Natural killer cell (primary cell): ENCODE measurements at regions of chr4 and their contacts with region 1.

Region 1: GRCh38 chr4:174282836-174283506 is 496 bp downstream of the FBXO8 start:
- DNase-seq: peak; percentile 71 to 93
- ATAC-seq: peak; percentile 94 to 99 (median 96)
- H3K4me3 ChIP-seq: peak overlapping the region; percentile 84
- H3K4me3 Mint-ChIP-seq: peak overlapping the region; percentile 99
- H3K27ac ChIP-seq: peak overlapping the region; percentile 94
- H3K27ac Mint-ChIP-seq: peak overlapping the region; percentile 99
- H3K4me1 ChIP-seq: peaks cover 4% of the 10 kb centered on the region
- H3K4me1 Mint-ChIP-seq: peaks cover 65 to 78% of the 10 kb centered on the region in 2 donors
- H3K27me3 ChIP-seq: no peaks in the 10 kb centered on the region
- H3K27me3 Mint-ChIP-seq: no peaks in the 10 kb centered on the region
- CTCF ChIP-seq: no peak

Region 2: DNA sequence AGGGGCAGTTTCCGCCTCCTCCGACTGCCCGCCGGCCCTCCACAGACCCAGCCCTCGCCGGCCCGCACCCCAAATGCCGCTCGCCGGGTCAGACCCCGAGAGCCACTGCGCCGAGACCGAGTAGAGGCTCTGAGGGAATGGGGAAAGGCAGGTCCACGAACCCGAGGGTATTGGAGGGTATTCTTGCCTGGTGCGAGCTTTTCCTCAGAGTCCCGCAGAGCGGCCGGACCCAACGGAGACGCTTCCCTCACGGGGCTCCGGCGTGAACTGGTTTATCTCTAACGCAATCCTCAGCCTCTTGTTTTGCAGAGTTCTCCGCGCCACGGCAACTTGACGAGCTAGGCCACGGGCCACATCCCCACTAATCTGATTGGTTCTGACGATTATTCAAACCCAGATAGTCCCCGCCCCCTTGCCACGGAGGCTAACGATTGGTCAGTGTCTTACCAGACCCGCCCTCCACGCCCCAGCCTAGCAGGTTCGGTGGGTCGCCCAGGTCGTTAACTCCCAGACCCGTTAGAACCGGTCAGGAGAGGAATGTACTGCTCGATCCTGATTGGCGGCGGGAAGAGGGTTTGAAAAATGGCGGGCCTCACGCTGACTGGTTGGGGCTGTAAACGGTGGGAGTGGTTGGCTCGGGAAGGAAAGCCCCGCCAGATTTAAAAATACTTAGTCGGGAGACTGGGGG is 948.7 kb before region 1 on chr4 and contains the start of gene HMGB2:
- intact Hi-C with region 1: loop called (anchors 2 kb)
- DNase-seq: peak; percentile 99 to 100
- ATAC-seq: peak; percentile 90 to 98 (median 90)
- H3K4me3 ChIP-seq: peak within 1 kb of the TSS; percentile 60
- H3K4me3 Mint-ChIP-seq: peak within 1 kb of the TSS; percentile 99
- H3K27ac ChIP-seq: peak within 1 kb of the TSS; percentile 89
- H3K27ac Mint-ChIP-seq: peak within 1 kb of the TSS; percentile 98 to 99
- H3K4me1 ChIP-seq: peaks cover 11% of the 10 kb centered on the region
- H3K4me1 Mint-ChIP-seq: peaks cover 27 to 33% of the 10 kb centered on the region in 2 donors
- H3K27me3 ChIP-seq: no peaks in the 10 kb centered on the region
- H3K27me3 Mint-ChIP-seq: no peaks in the 10 kb centered on the region
- CTCF ChIP-seq: no peak
- total RNA-seq, gene HMGB2: 145 to 214 (median 151) TPM

Region 3: GRCh38 chr4:174522183-174523048 is 239.4 kb after region 1 on chr4 and contains the start of gene HPGD:
- intact Hi-C with region 1: loop called (anchors 5 kb)
- DNase-seq: peak; percentile 70 to 81
- ATAC-seq: peak; percentile 91 to 94 (median 93)
- H3K4me3 ChIP-seq: peak within 1 kb of the TSS; percentile 42
- H3K4me3 Mint-ChIP-seq: peak within 1 kb of the TSS; percentile 95
- H3K27ac ChIP-seq: peak within 1 kb of the TSS; percentile 68
- H3K27ac Mint-ChIP-seq: peak within 1 kb of the TSS; percentile 79 to 90
- H3K4me1 ChIP-seq: peaks cover 16% of the 10 kb centered on the region
- H3K4me1 Mint-ChIP-seq: peaks cover 12 to 34% of the 10 kb centered on the region in 2 donors
- H3K27me3 ChIP-seq: no peaks in the 10 kb centered on the region
- H3K27me3 Mint-ChIP-seq: peaks cover 10 to 12% of the 10 kb centered on the region in 2 donors
- CTCF ChIP-seq: no peak
- total RNA-seq, gene HPGD: 2.2 to 26.7 (median 12.0) TPM

Region 4: GRCh38 chr4:176195184-176195978 is 1912.4 kb after region 1 on chr4 and contains the start of gene SPATA4:
- intact Hi-C with region 1: loop called (anchors 5 kb)
- DNase-seq: peak; percentile 91 to 96
- ATAC-seq: peak; percentile 97
- H3K4me3 ChIP-seq: peak within 1 kb of the TSS; percentile 37
- H3K4me3 Mint-ChIP-seq: peak within 1 kb of the TSS; percentile 92
- H3K27ac ChIP-seq: peak within 1 kb of the TSS; percentile 16
- H3K27ac Mint-ChIP-seq: peak within 1 kb of the TSS; percentile 93 to 95
- H3K4me1 ChIP-seq: peaks cover 6% of the 10 kb centered on the region
- H3K4me1 Mint-ChIP-seq: peaks cover 9 to 10% of the 10 kb centered on the region in 2 donors
- H3K27me3 ChIP-seq: peaks cover 3% of the 10 kb centered on the region
- H3K27me3 Mint-ChIP-seq: peaks cover 12 to 17% of the 10 kb centered on the region in 2 donors
- CTCF ChIP-seq: no peak
- total RNA-seq, gene SPATA4: not detected